Activated T-helper 1 cell treated with anti-CD3 and anti-CD28 coated beads, Interleukin-12 subunit alpha, Interleukin-12 subunit beta, Interleukin-2, Interleukin-4 antibody, amounts not matched to agents 30 ng/mL and 10 ng/mL and 1 ng/mL, durations not matched to agents 14 hours and 24 hours and 36 hours (primary cell): ENCODE measurements at regions of chr9 and their contacts with region 1.

Region 1: GRCh38 chr9:126228781-126229444 is 97.7 kb upstream of the MVB12B start:
- DNase-seq: peak; percentile 40
- H3K4me3 Mint-ChIP-seq: no peak overlapping the region
- H3K27ac Mint-ChIP-seq: no peak overlapping the region
- H3K4me1 Mint-ChIP-seq: peaks cover 6% of the 10 kb centered on the region
- H3K27me3 Mint-ChIP-seq: peaks cover 20% of the 10 kb centered on the region

Region 2: GRCh38 chr9:125558453-125559092 is 670.3 kb before region 1 on chr9:
- intact Hi-C with region 1: loop called (anchors 1 kb)
- DNase-seq: peak; percentile 31
- H3K4me3 Mint-ChIP-seq: no peak overlapping the region
- H3K27ac Mint-ChIP-seq: no peak overlapping the region
- H3K4me1 Mint-ChIP-seq: peaks cover 18% of the 10 kb centered on the region
- H3K27me3 Mint-ChIP-seq: no peaks in the 10 kb centered on the region

Region 3: DNA sequence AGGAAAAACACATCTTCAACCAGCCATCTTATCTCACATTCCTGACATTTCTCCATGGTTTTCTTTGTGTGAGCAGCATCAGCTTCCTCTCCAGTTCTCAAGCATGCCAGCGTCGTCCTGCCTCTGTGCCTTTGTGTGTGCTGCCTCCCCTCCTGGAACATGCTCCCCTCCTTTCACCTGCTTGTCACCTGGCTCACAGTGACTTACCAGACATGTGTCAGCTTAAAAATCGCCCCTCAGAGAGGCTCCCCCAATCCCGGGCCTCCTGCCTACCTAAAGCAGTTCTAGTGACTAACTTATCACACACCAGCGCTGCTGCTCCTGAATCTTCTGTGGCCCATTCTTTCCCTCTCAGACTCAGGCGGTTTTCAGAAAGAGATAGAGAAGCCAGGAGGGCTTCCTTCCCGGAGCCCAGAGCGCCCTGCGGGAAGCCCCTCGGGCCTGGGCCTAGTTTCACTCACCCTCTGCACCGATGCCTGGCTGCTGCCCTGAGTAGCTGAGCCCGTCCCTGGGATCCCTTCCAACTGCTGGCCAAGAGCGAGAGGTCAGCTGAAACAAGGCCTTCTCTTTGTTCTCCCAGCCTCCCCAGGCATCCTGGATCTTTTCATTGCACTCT is 46.6 kb after region 1 on chr9:
- intact Hi-C with region 1: no loop called
- DNase-seq: no peak
- H3K4me3 Mint-ChIP-seq: no peak overlapping the region
- H3K27ac Mint-ChIP-seq: no peak overlapping the region
- H3K4me1 Mint-ChIP-seq: no peaks in the 10 kb centered on the region
- H3K27me3 Mint-ChIP-seq: peaks cover 23% of the 10 kb centered on the region